H1 (cell line): ENCODE measurements at regions of chr7 and their contacts with region 1.

Region 1: GRCh38 chr7:27329911-27330310 is 87.3 kb downstream of the EVX1 start:
- DNase-seq: no peak
- H3K4me3 ChIP-seq: no peak overlapping the region
- H3K27ac ChIP-seq: no peak overlapping the region
- H3K4me1 ChIP-seq: no peaks in the 10 kb centered on the region
- H3K27me3 ChIP-seq: no peaks in the 10 kb centered on the region
- CTCF ChIP-seq: peak in 2 of 3 experiments; percentile 15 to 17; a peak in 2 of 4 replicates
- EP300 ChIP-seq: no peak
- POLR2A ChIP-seq: no peak
- RAD21 ChIP-seq: peak; percentile 22 to 36; a peak in 2 of 4 replicates

Region 2: DNA sequence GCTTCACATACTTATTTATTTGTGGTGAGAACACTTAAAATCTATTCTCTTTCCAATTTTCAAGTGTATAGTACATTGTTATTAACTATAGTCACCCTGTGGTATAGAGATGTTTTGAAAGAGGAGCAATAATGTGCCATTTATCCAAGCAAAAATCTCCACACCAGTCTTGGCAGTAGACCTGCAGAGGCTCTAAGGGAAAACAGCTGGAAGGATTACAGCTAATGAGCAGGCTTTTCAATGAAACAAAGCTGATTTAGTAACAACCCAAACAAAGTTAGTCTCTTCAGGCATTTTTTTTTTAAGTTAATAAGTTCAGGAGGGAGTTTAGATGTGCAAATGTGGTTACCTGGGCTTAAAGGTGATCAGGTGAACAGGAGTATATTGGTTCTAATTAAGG is 14.6 kb after region 1 on chr7:
- CTCF ChIA-PET with region 1: interaction called, 14 read pairs
- POLR2A ChIA-PET with region 1: interaction called, 3 read pairs
- DNase-seq: no peak
- H3K4me3 ChIP-seq: no peak overlapping the region
- H3K27ac ChIP-seq: no peak overlapping the region
- H3K4me1 ChIP-seq: peaks cover 0 to 7% (median 3%) of the 10 kb centered on the region in 4 experiments; a peak in 2 of 7 replicates
- H3K27me3 ChIP-seq: no peaks in the 10 kb centered on the region
- CTCF ChIP-seq: no peak
- EP300 ChIP-seq: no peak
- POLR2A ChIP-seq: no peak
- RAD21 ChIP-seq: no peak